ENCODE measurements at regions of chr13 and their contacts with region 1.

Region 1: GRCh38 chr13:107025978-107026377 is 458.0 kb upstream of the ARGLU1 start:
- DNase-seq: no peak
- H3K4me3 Mint-ChIP-seq: no peak overlapping the region
- H3K27ac Mint-ChIP-seq: no peak overlapping the region
- H3K4me1 Mint-ChIP-seq: no peaks in the 10 kb centered on the region
- H3K27me3 Mint-ChIP-seq: no peaks in the 10 kb centered on the region

Region 2: DNA sequence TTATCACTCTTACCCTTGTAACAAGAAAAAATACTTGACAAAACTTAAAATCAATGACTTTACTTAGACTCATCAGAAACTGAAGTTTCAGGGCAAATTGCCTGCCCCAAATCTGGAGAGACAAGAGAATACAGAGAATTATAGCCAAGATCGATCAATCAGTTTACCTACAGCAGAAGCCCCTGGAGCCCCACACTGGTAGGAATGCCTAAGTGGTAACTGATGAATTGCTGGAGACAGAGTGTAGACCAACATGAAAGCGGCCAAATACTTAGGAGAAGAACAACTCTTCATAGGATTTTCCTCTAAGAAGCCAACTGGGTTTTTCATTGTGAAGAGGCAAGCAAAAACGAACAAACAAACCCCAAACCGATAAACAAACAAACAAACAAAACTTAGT is 1920.5 kb before region 1 on chr13:
- intact Hi-C with region 1: loop called (anchors 10 kb)
- DNase-seq: no peak
- H3K4me3 Mint-ChIP-seq: no peak overlapping the region
- H3K27ac Mint-ChIP-seq: no peak overlapping the region
- H3K4me1 Mint-ChIP-seq: no peaks in the 10 kb centered on the region
- H3K27me3 Mint-ChIP-seq: no peaks in the 10 kb centered on the region